H1 (cell line): ENCODE measurements at regions of chr17 and their contacts with region 1.

Region 1: GRCh38 chr17:50200457-50201275 is 765 bp downstream of the COL1A1 start:
- DNase-seq: peak; percentile 84 to 96
- H3K4me3 ChIP-seq: peak overlapping the region; percentile 49 to 72 (median 60)
- H3K27ac ChIP-seq: no peak overlapping the region
- H3K4me1 ChIP-seq: peaks cover 0 to 5% (median 1%) of the 10 kb centered on the region in 4 experiments; a peak in 5 of 7 replicates
- H3K27me3 ChIP-seq: peaks cover 0 to 29% (median 14%) of the 10 kb centered on the region in 4 experiments; a peak in 5 of 7 replicates
- CTCF ChIP-seq: peak; percentile 76 to 85 (median 85)
- EP300 ChIP-seq: no peak
- POLR2A ChIP-seq: no peak
- RAD21 ChIP-seq: peak; percentile 89 to 90

Region 2: DNA sequence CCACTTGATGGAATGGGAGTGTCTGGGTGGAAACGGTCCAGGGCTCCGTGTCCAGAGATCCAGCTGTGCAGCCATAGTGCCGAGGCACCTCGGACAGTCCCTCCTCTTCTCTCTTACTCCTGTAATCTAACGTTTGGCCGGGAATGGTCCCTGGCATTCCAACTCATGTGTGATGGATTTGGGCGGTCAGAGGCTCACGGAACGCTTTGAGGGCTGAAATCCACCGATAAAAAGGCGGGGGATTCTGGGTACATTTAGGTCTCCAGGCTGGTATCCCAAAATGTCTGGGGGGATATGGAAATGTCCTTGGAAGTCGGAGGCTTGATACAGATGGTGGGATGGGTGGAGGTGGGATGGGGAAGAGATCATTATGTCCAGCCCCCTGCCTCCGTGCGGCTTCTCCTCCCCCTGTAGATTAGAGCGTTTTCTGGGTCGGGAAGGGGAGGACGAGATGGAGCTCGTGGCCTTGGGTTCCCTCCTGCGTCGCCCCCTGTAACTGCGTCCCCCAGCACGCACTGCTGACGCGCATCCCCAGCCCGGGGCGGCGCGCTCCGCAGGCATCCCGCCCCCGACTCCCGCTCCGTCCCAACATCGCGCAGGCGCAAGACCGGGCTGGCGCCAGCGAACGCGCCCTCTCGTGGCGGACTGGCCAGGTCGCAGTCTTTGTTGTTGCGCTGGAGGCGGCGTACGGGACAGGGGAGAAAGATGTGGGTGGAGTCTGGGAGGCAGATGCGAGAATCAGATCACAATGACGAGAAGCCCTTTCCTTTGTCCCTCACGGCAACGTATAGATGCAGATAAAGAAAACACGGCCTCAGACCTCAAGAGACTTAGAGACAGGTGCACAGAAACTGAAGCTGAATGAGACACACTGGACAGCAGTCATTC is 39.4 kb before region 1 on chr17:
- CTCF ChIA-PET with region 1: interaction called, 19 read pairs
- POLR2A ChIA-PET with region 1: interaction called, 3 read pairs
- DNase-seq: peak in 1 of 2 experiments; percentile 99
- H3K4me3 ChIP-seq: peak overlapping the region; percentile 28 to 62 (median 40)
- H3K27ac ChIP-seq: no peak overlapping the region
- H3K4me1 ChIP-seq: peaks cover 0 to 7% (median 6%) of the 10 kb centered on the region in 4 experiments; a peak in 3 of 7 replicates
- H3K27me3 ChIP-seq: peaks cover 0 to 6% (median 0%) of the 10 kb centered on the region in 4 experiments; a peak in 2 of 7 replicates
- CTCF ChIP-seq: peak; percentile 89 to 99 (median 97)
- EP300 ChIP-seq: no peak
- POLR2A ChIP-seq: peak in 1 of 2 experiments; percentile 55; a peak in 1 of 3 replicates
- RAD21 ChIP-seq: peak; percentile 56 to 72

Region 3: GRCh38 chr17:50183421-50183994 is 17.2 kb before region 1 on chr17:
- CTCF ChIA-PET with region 1: interaction called, 145 read pairs
- POLR2A ChIA-PET with region 1: interaction called, 9 read pairs
- DNase-seq: no peak
- H3K4me3 ChIP-seq: no peak overlapping the region
- H3K27ac ChIP-seq: no peak overlapping the region
- H3K4me1 ChIP-seq: peaks cover 2 to 18% (median 6%) of the 10 kb centered on the region in 4 experiments; a peak in 6 of 7 replicates
- H3K27me3 ChIP-seq: no peaks in the 10 kb centered on the region
- CTCF ChIP-seq: no peak
- EP300 ChIP-seq: no peak
- POLR2A ChIP-seq: no peak
- RAD21 ChIP-seq: no peak

Region 4: GRCh38 chr17:50269477-50270434 is 69.1 kb after region 1 on chr17:
- CTCF ChIA-PET with region 1: interaction called, 1,349 read pairs
- POLR2A ChIA-PET with region 1: interaction called, 22 read pairs
- DNase-seq: peak in 1 of 2 experiments; percentile 86
- H3K4me3 ChIP-seq: 0 out of 8 replicates have a peak overlapping the region, but pooled peaks of 1 of the 4 experiments have one; percentile 5
- H3K27ac ChIP-seq: no peak overlapping the region
- H3K4me1 ChIP-seq: peaks cover 2 to 25% (median 21%) of the 10 kb centered on the region in 4 experiments
- H3K27me3 ChIP-seq: peaks cover 0 to 12% (median 5%) of the 10 kb centered on the region in 4 experiments; a peak in 4 of 7 replicates
- CTCF ChIP-seq: peak; percentile 76 to 96 (median 86)
- EP300 ChIP-seq: no peak
- POLR2A ChIP-seq: no peak
- RAD21 ChIP-seq: peak; percentile 80 to 87

Region 5: DNA sequence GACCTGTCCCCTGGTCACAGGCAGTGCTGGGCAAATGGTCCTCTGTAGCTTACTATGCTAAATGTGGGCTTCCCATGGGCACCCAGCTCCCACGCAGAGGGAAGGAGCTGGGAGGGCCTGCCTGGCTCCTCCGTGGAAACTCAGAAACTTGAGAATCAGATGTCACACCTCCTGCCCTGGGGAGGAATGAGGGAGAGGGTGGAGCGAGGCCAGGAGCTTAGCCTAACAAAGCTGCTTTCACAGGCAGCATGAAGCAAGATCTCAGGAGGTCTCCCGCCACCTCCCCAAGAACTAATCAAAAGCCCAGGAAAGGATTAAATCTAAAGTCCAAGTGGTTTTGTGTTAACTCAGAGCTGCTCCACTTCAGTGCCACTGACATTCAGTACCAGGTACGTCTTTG is 111.6 kb after region 1 on chr17:
- CTCF ChIA-PET with region 1: interaction called, 24 read pairs
- POLR2A ChIA-PET with region 1: no interaction called
- DNase-seq: no peak
- H3K4me3 ChIP-seq: no peak overlapping the region
- H3K27ac ChIP-seq: no peak overlapping the region
- H3K4me1 ChIP-seq: peaks cover 2 to 12% (median 7%) of the 10 kb centered on the region in 4 experiments; a peak in 4 of 7 replicates
- H3K27me3 ChIP-seq: no peaks in the 10 kb centered on the region
- CTCF ChIP-seq: no peak
- EP300 ChIP-seq: no peak
- POLR2A ChIP-seq: no peak
- RAD21 ChIP-seq: no peak